CD4-positive, alpha-beta T cell (primary cell): ENCODE measurements at regions of chr7 and their contacts with region 1.

Region 1: DNA sequence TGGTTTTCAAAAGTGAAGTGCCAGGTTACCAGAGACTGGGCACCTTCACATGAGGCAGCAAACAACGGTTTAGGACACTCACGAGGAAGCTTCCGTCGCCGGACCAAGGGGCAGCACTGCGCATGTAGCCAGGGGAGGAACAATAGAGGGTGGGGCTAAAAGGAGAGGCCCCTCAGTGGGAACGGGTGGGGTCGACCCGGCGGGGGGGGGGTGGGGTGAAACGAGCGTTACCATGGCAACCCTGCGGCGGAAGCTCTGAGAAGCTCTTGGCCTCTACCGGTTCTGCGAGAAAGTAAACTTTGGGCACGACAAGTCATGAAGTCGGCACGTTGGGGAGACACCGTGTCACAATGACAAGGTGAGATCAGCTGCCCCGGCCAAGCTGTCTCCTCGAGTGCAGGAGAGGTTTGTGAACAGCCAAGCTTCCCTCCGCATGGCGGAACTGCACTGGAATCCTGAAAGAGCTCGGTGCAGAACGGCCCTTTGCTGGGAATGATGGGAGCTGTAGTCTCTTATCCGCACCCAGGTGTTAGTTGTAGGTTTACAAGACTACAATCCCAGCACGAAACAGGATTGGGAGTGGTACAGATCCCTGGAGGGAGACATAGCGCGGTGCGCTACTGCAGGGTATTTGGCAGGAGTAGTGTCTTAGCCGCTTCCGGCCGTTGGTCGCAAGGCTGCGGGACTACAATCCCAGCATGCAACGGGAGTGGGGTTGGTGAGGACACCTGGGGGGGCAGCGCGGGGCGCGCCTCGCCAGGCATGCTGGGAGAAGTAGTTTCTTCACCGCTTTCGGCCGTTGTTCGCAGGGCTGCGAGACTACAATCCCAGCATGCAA is 72.8 kb upstream of the ZNF722 start:
- DNase-seq: peak; percentile 81 to 97 (median 87)
- ATAC-seq: peak; percentile 95
- H3K4me3 ChIP-seq: peak overlapping the region; percentile 84
- H3K4me3 Mint-ChIP-seq: peak overlapping the region; percentile 96
- H3K27ac ChIP-seq: peak overlapping the region; percentile 43 to 87
- H3K27ac Mint-ChIP-seq: peak overlapping the region; percentile 91
- H3K4me1 ChIP-seq: peaks cover 16% of the 10 kb centered on the region
- H3K4me1 Mint-ChIP-seq: peaks cover 25% of the 10 kb centered on the region
- H3K27me3 ChIP-seq: no peaks in the 10 kb centered on the region
- H3K27me3 Mint-ChIP-seq: no peaks in the 10 kb centered on the region
- CTCF ChIP-seq: no peak

Region 2: GRCh38 chr7:63900394-63901203 is 25.2 kb before region 1 on chr7:
- CTCF ChIA-PET with region 1: interaction called, 3 read pairs
- POLR2A ChIA-PET with region 1: interaction called, 53 read pairs
- intact Hi-C with region 1: loop called (anchors 1 kb)
- DNase-seq: peak; percentile 79 to 96 (median 86)
- ATAC-seq: peak; percentile 93
- H3K4me3 ChIP-seq: peak overlapping the region; percentile 73
- H3K4me3 Mint-ChIP-seq: peak overlapping the region; percentile 99
- H3K27ac ChIP-seq: peak overlapping the region; percentile 55 to 87
- H3K27ac Mint-ChIP-seq: peak overlapping the region; percentile 84
- H3K4me1 ChIP-seq: peaks cover 19% of the 10 kb centered on the region
- H3K4me1 Mint-ChIP-seq: peaks cover 12% of the 10 kb centered on the region
- H3K27me3 ChIP-seq: no peaks in the 10 kb centered on the region
- H3K27me3 Mint-ChIP-seq: no peaks in the 10 kb centered on the region
- CTCF ChIP-seq: no peak

Region 3: GRCh38 chr7:63953181-63953580 is 27.3 kb after region 1 on chr7:
- CTCF ChIA-PET with region 1: no interaction called
- POLR2A ChIA-PET with region 1: no interaction called
- intact Hi-C with region 1: no loop called
- DNase-seq: no peak
- ATAC-seq: no peak
- H3K4me3 ChIP-seq: no peak overlapping the region
- H3K4me3 Mint-ChIP-seq: no peak overlapping the region
- H3K27ac ChIP-seq: no peak overlapping the region
- H3K27ac Mint-ChIP-seq: no peak overlapping the region
- H3K4me1 ChIP-seq: no peaks in the 10 kb centered on the region
- H3K4me1 Mint-ChIP-seq: no peaks in the 10 kb centered on the region
- H3K27me3 ChIP-seq: no peaks in the 10 kb centered on the region
- H3K27me3 Mint-ChIP-seq: no peaks in the 10 kb centered on the region
- CTCF ChIP-seq: no peak

Region 4: DNA sequence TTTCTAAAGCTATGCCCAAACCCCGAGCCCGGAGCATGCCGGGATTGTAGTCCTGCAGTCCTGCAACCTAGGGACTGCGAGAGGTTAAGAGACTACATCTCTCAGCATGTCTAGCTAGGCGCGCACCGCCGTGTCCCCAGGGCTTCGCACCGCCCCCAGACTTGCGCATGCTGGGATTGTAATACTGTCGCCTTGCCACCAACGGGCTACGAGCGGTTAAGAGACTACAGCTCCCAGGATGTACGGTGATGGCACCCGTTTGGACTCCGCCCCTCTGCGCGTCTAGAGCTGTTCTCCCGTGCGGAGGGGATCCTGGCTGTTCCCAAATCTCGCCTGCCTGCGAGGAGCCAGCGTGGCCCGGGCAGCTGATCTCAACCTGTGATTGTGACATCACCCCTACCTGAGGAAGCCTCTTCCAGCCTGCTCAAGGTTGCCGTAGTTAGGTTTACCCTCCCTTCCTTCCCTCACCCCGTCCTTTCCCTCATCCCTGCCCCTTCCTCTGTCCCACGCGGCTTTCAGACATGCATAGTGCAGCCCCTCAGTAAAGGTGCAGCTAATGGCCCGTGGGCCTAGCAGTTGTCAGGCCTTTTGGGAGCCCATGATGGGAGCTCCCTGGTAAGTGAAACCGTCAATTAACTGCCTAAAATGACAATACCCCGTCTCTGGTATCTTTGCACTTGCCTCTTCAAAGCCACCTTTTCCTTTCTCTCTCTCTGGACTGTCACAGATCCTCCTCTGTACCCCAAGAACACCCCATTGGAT is 381.6 kb after region 1 on chr7:
- CTCF ChIA-PET with region 1: no interaction called
- POLR2A ChIA-PET with region 1: interaction called, 26 read pairs
- intact Hi-C with region 1: loop called (anchors 2 kb)
- DNase-seq: peak; percentile 89 to 98 (median 92)
- ATAC-seq: peak; percentile 98
- H3K4me3 ChIP-seq: peak overlapping the region; percentile 59
- H3K4me3 Mint-ChIP-seq: peak overlapping the region; percentile 98
- H3K27ac ChIP-seq: peak overlapping the region; percentile 65 to 83
- H3K27ac Mint-ChIP-seq: peak overlapping the region; percentile 96
- H3K4me1 ChIP-seq: peaks cover 13% of the 10 kb centered on the region
- H3K4me1 Mint-ChIP-seq: peaks cover 22% of the 10 kb centered on the region
- H3K27me3 ChIP-seq: no peaks in the 10 kb centered on the region
- H3K27me3 Mint-ChIP-seq: no peaks in the 10 kb centered on the region
- CTCF ChIP-seq: no peak

Region 5: DNA sequence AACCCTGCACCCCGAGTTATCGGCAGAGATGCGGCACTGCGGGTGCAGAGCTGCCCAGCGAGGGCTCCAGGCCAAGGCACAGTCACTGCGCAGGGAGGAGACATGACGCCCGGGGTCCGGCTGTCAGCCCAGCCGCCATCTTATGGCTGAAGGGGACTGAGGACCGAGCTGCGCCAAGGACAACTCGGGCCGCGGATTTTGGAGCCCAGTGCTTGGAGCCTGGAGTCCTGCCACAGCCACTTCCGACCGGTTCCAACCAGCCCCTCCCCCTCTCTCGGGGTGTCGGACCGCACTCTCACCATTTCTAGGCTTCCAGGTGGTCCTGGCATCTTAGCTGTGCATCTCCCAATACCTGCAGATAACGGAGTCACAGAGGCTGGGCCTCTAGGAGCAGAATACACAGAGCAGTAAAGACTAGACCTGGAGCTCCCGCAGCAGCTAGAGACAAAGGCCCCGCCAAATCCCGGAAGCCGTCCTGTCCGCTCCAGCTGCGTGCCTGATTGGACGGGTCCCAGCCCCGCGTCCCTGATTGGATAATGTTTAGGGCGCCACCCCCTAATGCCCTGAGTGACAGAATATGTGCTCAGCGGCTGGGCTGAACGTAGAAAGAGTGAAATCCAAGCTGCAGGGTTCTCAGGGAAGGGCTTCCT is 636.9 kb after region 1 on chr7 and contains the start of gene ZNF680:
- CTCF ChIA-PET with region 1: no interaction called
- POLR2A ChIA-PET with region 1: interaction called, 10 read pairs
- intact Hi-C with region 1: loop called in 1 of 2 experiments (anchors 10 kb)
- DNase-seq: peak; percentile 79 to 95 (median 84)
- ATAC-seq: peak; percentile 98
- H3K4me3 ChIP-seq: peak within 1 kb of the TSS; percentile 93
- H3K4me3 Mint-ChIP-seq: peak within 1 kb of the TSS; percentile 100
- H3K27ac ChIP-seq: peak within 1 kb of the TSS; percentile 41
- H3K27ac Mint-ChIP-seq: peak within 1 kb of the TSS; percentile 88
- H3K4me1 ChIP-seq: peaks cover 21% of the 10 kb centered on the region
- H3K4me1 Mint-ChIP-seq: peaks cover 41% of the 10 kb centered on the region
- H3K27me3 ChIP-seq: no peaks in the 10 kb centered on the region
- H3K27me3 Mint-ChIP-seq: no peaks in the 10 kb centered on the region
- CTCF ChIP-seq: no peak
- total RNA-seq, gene ZNF680: 8.3 to 8.9 TPM

Region 6: GRCh38 chr7:64794171-64794844 is 868.5 kb after region 1 on chr7 and contains the start of gene ZNF138:
- CTCF ChIA-PET with region 1: no interaction called
- POLR2A ChIA-PET with region 1: interaction called, 5 read pairs
- intact Hi-C with region 1: loop called (anchors 2 to 10 kb)
- DNase-seq: peak; percentile 86 to 96 (median 92)
- ATAC-seq: peak; percentile 99
- H3K4me3 ChIP-seq: peak within 1 kb of the TSS; percentile 98
- H3K4me3 Mint-ChIP-seq: peak within 1 kb of the TSS; percentile 98
- H3K27ac ChIP-seq: peak within 1 kb of the TSS; percentile 72 to 88
- H3K27ac Mint-ChIP-seq: peak within 1 kb of the TSS; percentile 98
- H3K4me1 ChIP-seq: peaks cover 27% of the 10 kb centered on the region
- H3K4me1 Mint-ChIP-seq: peaks cover 36% of the 10 kb centered on the region
- H3K27me3 ChIP-seq: no peaks in the 10 kb centered on the region
- H3K27me3 Mint-ChIP-seq: no peaks in the 10 kb centered on the region
- CTCF ChIP-seq: no peak
- total RNA-seq, gene ZNF138: 5.6 to 7.3 TPM

Region 7: GRCh38 chr7:65006094-65006992 is 1080.5 kb after region 1 on chr7 and contains the start of gene ERV3-1:
- CTCF ChIA-PET with region 1: no interaction called
- POLR2A ChIA-PET with region 1: interaction called, 6 read pairs
- intact Hi-C with region 1: loop called in 1 of 2 experiments (anchors 10 kb)
- DNase-seq: peak; percentile 84 to 97 (median 90)
- ATAC-seq: peak; percentile 99
- H3K4me3 ChIP-seq: peak within 1 kb of the TSS; percentile 75
- H3K4me3 Mint-ChIP-seq: peak within 1 kb of the TSS; percentile 96
- H3K27ac ChIP-seq: peak within 1 kb of the TSS; percentile 49
- H3K27ac Mint-ChIP-seq: peak within 1 kb of the TSS; percentile 88
- H3K4me1 ChIP-seq: peaks cover 21% of the 10 kb centered on the region
- H3K4me1 Mint-ChIP-seq: peaks cover 45% of the 10 kb centered on the region
- H3K27me3 ChIP-seq: no peaks in the 10 kb centered on the region
- H3K27me3 Mint-ChIP-seq: no peaks in the 10 kb centered on the region
- CTCF ChIP-seq: no peak
- total RNA-seq, gene ERV3-1: 16.6 to 17.2 TPM

Region 8: GRCh38 chr7:65373608-65374351 is 1447.9 kb after region 1 on chr7 and contains the start of gene ZNF92:
- CTCF ChIA-PET with region 1: no interaction called
- POLR2A ChIA-PET with region 1: interaction called, 3 read pairs
- intact Hi-C with region 1: loop called (anchors 10 kb)
- DNase-seq: peak; percentile 89 to 98 (median 92)
- ATAC-seq: peak; percentile 98
- H3K4me3 ChIP-seq: peak within 1 kb of the TSS; percentile 97
- H3K4me3 Mint-ChIP-seq: peak within 1 kb of the TSS; percentile 95
- H3K27ac ChIP-seq: peak within 1 kb of the TSS; percentile 67 to 85
- H3K27ac Mint-ChIP-seq: peak within 1 kb of the TSS; percentile 94
- H3K4me1 ChIP-seq: peaks cover 38% of the 10 kb centered on the region
- H3K4me1 Mint-ChIP-seq: peaks cover 47% of the 10 kb centered on the region
- H3K27me3 ChIP-seq: no peaks in the 10 kb centered on the region
- H3K27me3 Mint-ChIP-seq: no peaks in the 10 kb centered on the region
- CTCF ChIP-seq: no peak
- total RNA-seq, gene ZNF92: 29.7 to 30.1 TPM